ENCODE measurements at regions of chr16 and their contacts with region 1.

Region 1: DNA sequence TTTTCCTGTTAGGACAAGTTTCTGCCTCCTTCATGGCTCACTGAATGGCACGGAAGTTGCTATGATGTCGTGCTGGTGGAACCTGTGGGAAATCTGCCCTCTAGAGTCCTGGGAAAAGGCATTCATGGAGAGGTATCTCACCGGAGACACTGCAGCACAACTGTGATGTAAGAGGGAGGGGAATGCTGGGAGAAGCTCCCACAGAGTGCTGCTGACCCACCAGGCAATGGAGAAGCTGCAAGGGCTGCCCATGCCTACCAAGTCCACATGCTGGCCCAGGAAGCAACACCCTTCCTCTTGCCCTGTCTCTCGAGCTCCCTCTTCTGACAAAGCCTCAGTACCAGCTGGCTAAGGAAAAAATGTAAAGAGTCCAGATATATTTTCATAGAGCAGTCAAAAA is 45.2 kb upstream of the SLC5A11 start:
- DNase-seq: no peak
- ATAC-seq: peak in 1 of 2 donors; percentile 42

Region 2: DNA sequence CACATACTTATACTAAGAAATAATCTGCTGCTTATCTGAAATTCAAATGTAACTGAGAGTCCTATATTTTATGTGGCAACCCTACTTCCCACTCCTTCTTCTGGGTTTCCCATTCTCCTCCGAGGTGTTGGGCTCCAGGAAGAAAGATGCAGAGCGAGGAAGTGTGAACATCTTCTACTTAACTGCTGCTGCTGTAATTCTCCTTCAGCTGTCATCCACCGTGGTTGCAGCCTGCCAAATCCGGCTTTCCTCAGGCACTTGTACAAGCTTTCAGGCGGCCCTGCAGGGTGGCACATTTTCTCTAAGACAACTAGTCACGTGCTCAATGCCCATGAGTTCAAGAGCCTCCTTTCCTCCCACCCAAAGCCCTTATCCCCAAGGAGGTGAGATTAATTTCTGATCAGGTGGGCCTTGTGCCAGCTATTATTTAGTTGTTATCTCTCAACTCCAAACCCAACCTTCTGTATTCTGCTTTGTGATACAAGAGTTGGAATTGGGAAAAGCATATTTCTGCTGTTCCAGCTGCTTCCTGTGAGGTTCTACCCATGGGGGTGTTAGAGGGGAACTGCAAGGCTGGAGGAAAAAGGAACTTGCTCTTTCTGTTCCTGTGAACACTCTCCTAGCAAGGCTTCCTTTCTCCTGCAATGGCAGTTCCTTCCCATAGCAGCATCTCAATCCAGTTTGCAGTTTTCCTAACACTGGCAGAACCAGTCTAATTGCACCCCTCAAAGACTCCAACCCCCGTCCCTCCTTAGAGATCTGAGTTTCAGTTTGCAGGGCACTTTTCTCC is 328.8 kb before region 1 on chr16:
- intact Hi-C with region 1: no loop called
- DNase-seq: no peak
- ATAC-seq: no peak

Region 3: GRCh38 chr16:24552705-24553246 is 247.8 kb before region 1 on chr16:
- intact Hi-C with region 1: loop called in 1 of 2 experiments (anchors 10 kb)
- DNase-seq: no peak
- ATAC-seq: no peak

Region 4: GRCh38 chr16:24568392-24568791 is 232.2 kb before region 1 on chr16:
- intact Hi-C with region 1: loop called in 1 of 2 experiments (anchors 5 kb)
- DNase-seq: no peak
- ATAC-seq: no peak

Region 5: DNA sequence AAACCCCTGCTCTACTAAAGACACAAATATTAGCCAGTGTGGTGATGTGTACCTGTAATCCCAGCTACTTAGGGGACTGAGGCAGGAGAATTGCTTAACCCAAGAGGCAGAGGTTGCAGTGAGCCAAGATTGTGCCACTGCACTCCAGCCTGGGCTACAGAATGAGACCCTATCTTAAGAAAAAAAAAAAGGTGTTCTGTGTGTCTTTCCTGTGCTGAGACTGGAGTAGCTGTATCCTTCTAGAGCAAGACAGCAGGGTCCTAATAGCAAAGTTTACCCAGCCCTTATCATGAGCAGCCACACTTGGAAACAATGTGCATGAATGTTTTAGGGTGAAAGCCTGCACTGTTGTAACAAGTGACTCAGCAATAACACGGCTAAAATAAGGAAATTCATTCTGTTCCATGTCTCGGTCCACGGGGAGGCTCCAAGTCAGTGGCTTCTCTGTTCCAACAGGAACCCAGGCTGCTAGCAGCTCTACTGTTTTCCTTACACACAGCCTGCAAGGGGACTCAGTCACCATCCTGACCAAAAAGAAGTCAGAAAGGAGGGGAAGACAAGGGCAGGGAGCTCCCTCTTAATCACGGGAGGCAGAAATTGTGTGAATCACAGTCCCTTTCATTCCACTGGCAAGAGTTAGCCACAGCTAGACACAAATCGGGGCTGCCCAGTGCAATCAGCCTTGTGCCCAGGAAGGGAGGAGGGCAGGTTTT is 38.1 kb after region 1 on chr16:
- intact Hi-C with region 1: no loop called
- DNase-seq: peak; percentile 53
- ATAC-seq: peak; percentile 78 to 86

Region 6: GRCh38 chr16:24939234-24939633 is 138.6 kb after region 1 on chr16:
- intact Hi-C with region 1: loop called in 1 of 2 experiments (anchors 10 kb)
- DNase-seq: no peak
- ATAC-seq: no peak

Measured in left cardiac atrium (tissue), 4 donors.